ENCODE measurements at regions of chr15 and their contacts with region 1.

Region 1: DNA sequence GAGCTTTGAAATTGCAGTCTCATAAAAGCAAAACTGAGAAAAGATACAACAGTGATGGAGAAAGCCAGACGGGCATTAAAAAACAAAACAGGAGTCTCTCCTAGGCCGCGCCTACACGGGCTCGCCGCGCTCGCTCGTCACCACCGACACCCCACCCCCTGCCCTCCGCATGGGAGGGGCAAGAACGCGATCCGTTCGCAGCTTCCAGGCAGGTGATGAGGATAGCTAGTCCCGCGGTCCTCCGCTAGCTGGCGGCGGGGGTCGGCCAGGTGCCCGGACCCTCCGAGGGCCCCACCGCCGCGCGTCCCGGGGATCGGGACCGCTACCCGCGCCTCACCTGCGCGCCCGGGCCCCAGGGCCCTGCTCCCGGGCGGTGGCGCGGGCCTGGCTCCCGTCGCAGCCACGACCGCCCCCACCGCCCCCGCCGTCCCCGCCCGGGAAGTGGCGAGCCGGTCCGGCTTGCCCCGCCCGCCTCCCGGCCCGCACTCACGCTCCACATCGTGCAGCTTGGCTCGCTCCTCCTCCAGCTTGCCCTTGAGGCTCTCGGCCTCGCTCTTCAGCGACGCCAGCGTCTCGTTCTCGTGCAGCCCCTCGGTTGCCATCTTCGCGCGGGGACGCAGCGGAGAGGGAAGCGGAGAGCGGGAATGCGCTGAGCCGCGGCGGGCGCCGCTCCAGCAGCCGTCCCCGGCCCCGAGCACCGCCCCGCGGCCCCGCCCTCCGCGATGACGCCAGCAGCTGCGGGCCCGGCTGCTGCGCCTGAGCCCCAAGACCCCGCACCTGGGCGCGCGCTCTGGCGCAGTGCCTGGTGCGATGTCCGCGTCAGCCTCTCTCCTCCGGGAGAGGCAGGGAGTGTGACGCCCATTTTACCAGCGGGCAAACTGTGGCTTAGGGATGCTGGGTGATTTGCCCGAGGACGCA is 11.7 kb downstream of the GNB5 start:
- DNase-seq: peak; percentile 71 to 92 (median 88)
- ATAC-seq: peak; percentile 82 to 90 (median 88)
- H3K4me3 ChIP-seq: peak overlapping the region; percentile 92 to 93
- H3K4me3 Mint-ChIP-seq: peak overlapping the region; percentile 84 to 94 (median 93)
- H3K27ac ChIP-seq: peak overlapping the region; percentile 98
- H3K27ac Mint-ChIP-seq: peak overlapping the region; percentile 97
- H3K4me1 ChIP-seq: peaks cover 9 to 26% of the 10 kb centered on the region in 2 experiments
- H3K4me1 Mint-ChIP-seq: peaks cover 37 to 48% (median 43%) of the 10 kb centered on the region in 3 donors
- H3K27me3 ChIP-seq: no peaks in the 10 kb centered on the region
- H3K27me3 Mint-ChIP-seq: no peaks in the 10 kb centered on the region

Region 2: DNA sequence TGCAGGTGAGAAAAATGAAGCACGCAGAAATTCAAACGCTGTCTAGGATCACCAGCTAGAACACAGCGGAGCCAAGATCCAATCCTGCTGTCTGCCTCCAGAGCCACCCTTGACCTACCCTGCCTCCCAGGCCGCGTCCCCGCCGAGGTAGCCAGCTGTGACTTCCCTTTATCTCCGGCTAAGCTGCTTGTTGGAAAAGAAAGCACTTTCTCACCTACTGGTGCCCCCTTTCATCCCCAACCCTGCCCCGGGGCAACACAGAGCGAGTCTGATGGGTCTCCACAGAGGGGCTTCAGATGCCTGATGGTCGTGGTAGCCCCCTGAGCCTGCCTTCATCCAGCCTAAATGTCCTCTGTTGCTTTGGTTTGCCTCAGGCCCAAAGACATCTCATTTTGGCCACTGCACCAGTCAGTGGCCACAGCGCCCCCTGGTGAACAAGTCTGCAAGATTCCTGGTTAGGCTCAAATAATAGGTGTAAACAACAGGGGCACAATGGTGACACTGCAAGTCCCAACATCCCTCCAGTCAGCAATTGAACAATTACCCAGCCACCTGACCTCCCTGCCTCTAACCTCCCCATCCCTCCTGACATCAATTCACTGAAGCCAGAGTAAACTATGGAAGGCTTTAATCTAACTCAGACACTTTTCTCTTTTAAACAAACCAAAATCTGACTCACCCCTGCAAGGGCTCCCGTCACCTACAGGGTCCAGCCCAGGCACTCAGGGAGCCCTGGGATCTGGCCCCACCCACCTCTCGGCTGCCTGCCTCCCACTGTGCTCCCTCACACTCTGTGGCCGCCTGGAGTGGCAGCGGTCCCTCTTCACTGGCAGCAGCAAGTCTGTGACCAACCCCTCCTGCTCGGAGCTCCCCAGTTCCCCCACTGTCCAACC is 39.7 kb before region 1 on chr15:
- CTCF ChIA-PET with region 1: interaction called, 3 read pairs
- POLR2A ChIA-PET with region 1: interaction called, 3 to 15 read pairs
- DNase-seq: peak in 33 of 35 experiments; percentile 11 to 74 (median 52)
- ATAC-seq: peak in 3 of 4 experiments; percentile 37 to 58 (median 46)
- H3K4me3 ChIP-seq: no peak overlapping the region
- H3K4me3 Mint-ChIP-seq: no peak overlapping the region
- H3K27ac ChIP-seq: no peak overlapping the region
- H3K27ac Mint-ChIP-seq: no peak overlapping the region
- H3K4me1 ChIP-seq: peaks cover 4 to 26% of the 10 kb centered on the region in 2 experiments
- H3K4me1 Mint-ChIP-seq: peaks cover 24 to 38% (median 31%) of the 10 kb centered on the region in 3 donors
- H3K27me3 ChIP-seq: no peaks in the 10 kb centered on the region
- H3K27me3 Mint-ChIP-seq: no peaks in the 10 kb centered on the region

Region 3: GRCh38 chr15:52208306-52208946 is 28.9 kb after region 1 on chr15:
- CTCF ChIA-PET with region 1: interaction called, 4 to 19 read pairs
- POLR2A ChIA-PET with region 1: interaction called, 3 to 6 read pairs
- DNase-seq: peak; percentile 43 to 81 (median 70)
- ATAC-seq: peak; percentile 88 to 100 (median 94)
- H3K4me3 ChIP-seq: no peak overlapping the region
- H3K4me3 Mint-ChIP-seq: no peak overlapping the region
- H3K27ac ChIP-seq: no peak overlapping the region
- H3K27ac Mint-ChIP-seq: no peak overlapping the region
- H3K4me1 ChIP-seq: no peaks in the 10 kb centered on the region
- H3K4me1 Mint-ChIP-seq: no peaks in the 10 kb centered on the region
- H3K27me3 ChIP-seq: no peaks in the 10 kb centered on the region
- H3K27me3 Mint-ChIP-seq: no peaks in the 10 kb centered on the region

Region 4: DNA sequence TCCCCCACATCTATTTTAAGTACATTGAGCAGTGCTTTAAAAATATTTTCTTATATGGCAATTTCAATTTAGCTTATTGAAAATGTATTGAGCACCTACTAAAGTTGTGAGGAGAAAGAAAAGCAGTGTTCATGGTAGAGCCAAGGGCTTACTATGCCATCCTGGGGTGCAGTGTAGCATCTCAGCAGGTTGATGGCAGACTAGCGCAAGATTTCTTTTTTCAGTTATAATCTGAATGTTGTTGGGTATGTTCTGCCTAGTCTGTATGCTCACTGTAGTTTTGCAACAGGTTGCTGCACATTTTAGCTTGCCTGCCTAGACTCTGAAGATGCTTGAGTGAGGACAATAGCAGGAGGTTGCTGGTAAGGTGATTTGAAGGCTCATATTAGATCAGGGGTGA is 1695.6 kb after region 1 on chr15:
- CTCF ChIA-PET with region 1: no interaction called
- POLR2A ChIA-PET with region 1: no interaction called
- DNase-seq: no peak
- ATAC-seq: no peak
- H3K4me3 ChIP-seq: no peak overlapping the region
- H3K4me3 Mint-ChIP-seq: no peak overlapping the region
- H3K27ac ChIP-seq: no peak overlapping the region
- H3K27ac Mint-ChIP-seq: no peak overlapping the region
- H3K4me1 ChIP-seq: no peaks in the 10 kb centered on the region
- H3K4me1 Mint-ChIP-seq: no peaks in the 10 kb centered on the region
- H3K27me3 ChIP-seq: no peaks in the 10 kb centered on the region
- H3K27me3 Mint-ChIP-seq: peaks cover 0 to 2% of the 10 kb centered on the region in 2 donors

Measured in T-cell (primary cell).